ENCODE measurements at regions of chr3 and their contacts with region 1.

Region 1: GRCh38 chr3:70539908-70540307 is 227.5 kb upstream of the MDFIC2 start:
- DNase-seq: no peak
- ATAC-seq: no peak
- H3K4me3 ChIP-seq: no peak overlapping the region
- H3K27ac ChIP-seq: no peak overlapping the region
- H3K4me1 ChIP-seq: no peaks in the 10 kb centered on the region
- H3K27me3 ChIP-seq: no peaks in the 10 kb centered on the region
- CTCF ChIP-seq: no peak

Region 2: GRCh38 chr3:70312336-70312735 is 227.6 kb before region 1 on chr3 and contains the start of gene MDFIC2:
- intact Hi-C with region 1: no loop called
- DNase-seq: no peak
- ATAC-seq: no peak
- H3K4me3 ChIP-seq: no peak within 1 kb of the TSS
- H3K27ac ChIP-seq: no peak within 1 kb of the TSS
- H3K4me1 ChIP-seq: no peaks in the 10 kb centered on the region
- H3K27me3 ChIP-seq: peaks cover 0 to 3% (median 0%) of the 10 kb centered on the region in 4 donors
- CTCF ChIP-seq: no peak
- total RNA-seq, gene MDFIC2: not detected

Region 3: GRCh38 chr3:70464876-70465275 is 75.0 kb before region 1 on chr3:
- intact Hi-C with region 1: no loop called
- DNase-seq: no peak
- ATAC-seq: no peak
- H3K4me3 ChIP-seq: no peak overlapping the region
- H3K27ac ChIP-seq: no peak overlapping the region
- H3K4me1 ChIP-seq: no peaks in the 10 kb centered on the region
- H3K27me3 ChIP-seq: no peaks in the 10 kb centered on the region
- CTCF ChIP-seq: no peak

Region 4: DNA sequence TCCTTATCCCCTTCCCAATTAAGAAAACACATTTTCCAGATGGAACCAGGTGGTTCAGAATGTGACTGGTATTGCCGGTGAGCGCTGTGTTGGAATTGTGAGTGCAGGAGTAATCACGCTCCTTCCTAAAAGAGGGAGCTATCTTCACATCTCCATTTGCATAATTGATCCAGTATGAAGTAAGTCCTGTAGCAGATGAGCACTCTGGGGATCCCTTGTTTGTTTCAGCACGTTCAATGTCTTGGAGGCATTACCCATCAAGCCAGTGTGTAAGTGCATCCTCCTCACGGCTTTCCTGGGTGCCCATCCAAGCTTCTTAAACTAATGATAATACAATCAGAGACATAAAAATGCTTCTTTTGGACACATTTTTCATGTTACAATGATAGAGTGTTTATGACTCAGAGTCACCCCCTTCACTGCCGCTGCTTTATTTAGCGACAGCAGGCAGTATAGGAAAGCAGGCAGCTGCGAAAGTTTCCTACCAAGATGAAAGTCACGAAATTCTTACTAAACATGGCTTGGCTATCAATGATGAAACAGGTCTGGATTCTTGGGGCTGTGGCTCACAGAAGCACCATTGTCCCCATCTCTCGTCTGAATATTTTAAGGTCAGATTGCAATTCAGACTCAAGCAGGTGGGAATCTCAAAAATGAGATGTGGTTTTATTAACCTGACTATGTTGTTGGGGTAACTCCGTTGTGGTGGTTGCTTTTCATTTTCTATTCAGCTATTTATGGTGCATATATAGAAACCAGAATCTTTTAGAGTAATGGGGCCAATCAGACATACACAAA is 118.8 kb after region 1 on chr3:
- intact Hi-C with region 1: no loop called
- DNase-seq: no peak
- ATAC-seq: no peak
- H3K4me3 ChIP-seq: no peak overlapping the region
- H3K27ac ChIP-seq: no peak overlapping the region
- H3K4me1 ChIP-seq: no peaks in the 10 kb centered on the region
- H3K27me3 ChIP-seq: no peaks in the 10 kb centered on the region
- CTCF ChIP-seq: no peak

Region 5: DNA sequence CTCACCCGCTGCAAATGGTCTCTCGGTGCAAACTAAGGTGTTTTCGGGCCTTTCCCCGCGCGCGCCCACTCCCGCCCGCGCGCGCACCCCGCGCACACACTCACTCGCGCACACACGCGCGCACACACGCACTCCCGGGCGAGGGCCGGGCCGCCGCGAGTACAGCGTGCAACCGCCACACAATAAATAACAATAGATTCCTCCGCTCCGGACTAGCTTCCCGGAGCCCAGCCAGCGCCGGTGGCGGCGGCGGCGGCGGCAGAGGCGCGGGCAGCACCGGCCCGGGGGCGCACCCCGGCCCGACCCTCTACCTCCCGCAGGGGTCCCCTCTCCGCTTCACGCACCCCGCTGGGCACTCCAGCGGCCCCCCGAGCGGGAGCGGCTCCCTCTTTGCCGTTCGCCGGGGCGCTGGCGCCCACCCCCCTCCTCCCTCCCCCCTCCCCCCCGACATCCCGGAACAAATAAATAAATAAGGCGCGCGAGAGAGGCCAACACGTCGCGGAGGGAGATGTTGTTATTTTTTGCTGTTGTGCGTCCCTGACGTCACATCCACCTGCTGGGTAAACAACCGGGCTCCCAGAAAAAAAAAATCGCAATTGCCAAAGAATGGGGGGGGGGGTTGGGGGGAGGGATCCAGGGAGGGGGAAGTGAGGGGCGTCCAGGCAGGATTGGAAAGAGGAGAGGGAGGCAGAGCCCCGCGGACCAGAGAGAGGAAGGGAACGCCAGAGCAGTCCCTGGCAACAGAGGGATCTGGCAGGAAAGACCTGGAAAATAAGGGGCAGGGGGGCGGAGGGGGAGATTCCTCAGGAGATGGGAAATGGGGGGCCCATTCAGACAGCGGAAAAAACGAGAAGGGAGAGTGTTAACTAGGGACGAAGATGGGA is 1043.9 kb after region 1 on chr3 and contains the start of gene FOXP1:
- intact Hi-C with region 1: loop called in 1 of 3 experiments (anchors 10 kb)
- DNase-seq: peak; percentile 76 to 88 (median 82)
- ATAC-seq: peak; percentile 51 to 79 (median 72)
- H3K4me3 ChIP-seq: peak within 1 kb of the TSS; percentile 61 to 92 (median 76)
- H3K27ac ChIP-seq: peak within 1 kb of the TSS; percentile 94 to 98 (median 96)
- H3K4me1 ChIP-seq: peaks cover 24 to 32% (median 30%) of the 10 kb centered on the region in 3 donors
- H3K27me3 ChIP-seq: no peaks in the 10 kb centered on the region
- CTCF ChIP-seq: no peak
- total RNA-seq, gene FOXP1: 34.8 to 74.1 (median 45.1) TPM

Measured in pancreas (tissue), 10 donors.